ENCODE measurements at regions of chr3 and their contacts with region 1.

Region 1: DNA sequence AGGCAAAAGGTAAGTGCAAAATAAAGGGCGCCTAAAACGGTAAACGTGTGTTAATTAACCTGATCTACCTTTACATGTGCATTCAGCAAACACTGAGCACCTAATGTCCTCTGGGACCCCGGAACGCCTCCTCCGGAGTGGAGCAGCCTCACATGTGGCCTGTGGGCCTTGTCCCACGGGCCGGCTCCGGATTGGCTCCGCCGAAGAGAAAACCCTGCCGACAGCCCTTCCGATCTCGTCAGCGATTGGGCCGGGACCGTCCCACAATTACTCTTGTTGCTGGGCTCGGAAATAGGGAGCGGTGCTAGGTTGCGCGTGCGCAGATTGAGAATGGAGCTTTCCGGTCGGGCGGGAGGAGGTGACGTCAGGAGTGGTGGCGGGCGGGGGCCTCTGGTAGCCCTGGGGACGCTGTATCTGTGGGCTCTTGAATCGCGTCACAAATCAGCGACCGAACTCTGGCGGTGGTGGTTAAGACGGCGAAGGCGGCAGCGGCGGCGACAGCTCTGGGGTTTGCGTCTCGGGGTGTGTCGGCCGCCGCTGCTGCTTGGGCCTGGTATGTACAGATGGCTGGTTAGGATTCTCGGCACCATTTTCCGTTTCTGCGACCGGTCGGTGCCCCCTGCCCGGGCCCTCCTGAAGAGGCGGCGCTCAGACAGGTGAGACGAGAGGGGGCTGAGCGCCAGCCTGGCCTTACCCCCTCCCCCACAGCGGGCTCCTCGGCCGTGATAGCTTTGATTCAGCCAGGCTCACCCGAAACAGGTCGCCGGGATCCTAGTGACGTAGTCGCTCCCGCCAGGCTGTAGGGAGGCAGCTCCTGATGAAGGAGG is at the start of gene SENP2:
- DNase-seq: peak; percentile 99 to 100 (median 100)
- ATAC-seq: peak; percentile 87
- H3K4me3 ChIP-seq: peak within 1 kb of the TSS; percentile 74 to 100
- H3K4me3 Mint-ChIP-seq: peak within 1 kb of the TSS; percentile 85
- H3K27ac ChIP-seq: peak within 1 kb of the TSS; percentile 92 to 99
- H3K27ac Mint-ChIP-seq: peak within 1 kb of the TSS; percentile 92
- H3K4me1 ChIP-seq: peaks cover 28% of the 10 kb centered on the region
- H3K4me1 Mint-ChIP-seq: peaks cover 36% of the 10 kb centered on the region
- H3K27me3 ChIP-seq: no peaks in the 10 kb centered on the region
- H3K27me3 Mint-ChIP-seq: no peaks in the 10 kb centered on the region
- CTCF ChIP-seq: no peak
- total RNA-seq, gene SENP2: 57.0 to 69.6 TPM

Region 2: DNA sequence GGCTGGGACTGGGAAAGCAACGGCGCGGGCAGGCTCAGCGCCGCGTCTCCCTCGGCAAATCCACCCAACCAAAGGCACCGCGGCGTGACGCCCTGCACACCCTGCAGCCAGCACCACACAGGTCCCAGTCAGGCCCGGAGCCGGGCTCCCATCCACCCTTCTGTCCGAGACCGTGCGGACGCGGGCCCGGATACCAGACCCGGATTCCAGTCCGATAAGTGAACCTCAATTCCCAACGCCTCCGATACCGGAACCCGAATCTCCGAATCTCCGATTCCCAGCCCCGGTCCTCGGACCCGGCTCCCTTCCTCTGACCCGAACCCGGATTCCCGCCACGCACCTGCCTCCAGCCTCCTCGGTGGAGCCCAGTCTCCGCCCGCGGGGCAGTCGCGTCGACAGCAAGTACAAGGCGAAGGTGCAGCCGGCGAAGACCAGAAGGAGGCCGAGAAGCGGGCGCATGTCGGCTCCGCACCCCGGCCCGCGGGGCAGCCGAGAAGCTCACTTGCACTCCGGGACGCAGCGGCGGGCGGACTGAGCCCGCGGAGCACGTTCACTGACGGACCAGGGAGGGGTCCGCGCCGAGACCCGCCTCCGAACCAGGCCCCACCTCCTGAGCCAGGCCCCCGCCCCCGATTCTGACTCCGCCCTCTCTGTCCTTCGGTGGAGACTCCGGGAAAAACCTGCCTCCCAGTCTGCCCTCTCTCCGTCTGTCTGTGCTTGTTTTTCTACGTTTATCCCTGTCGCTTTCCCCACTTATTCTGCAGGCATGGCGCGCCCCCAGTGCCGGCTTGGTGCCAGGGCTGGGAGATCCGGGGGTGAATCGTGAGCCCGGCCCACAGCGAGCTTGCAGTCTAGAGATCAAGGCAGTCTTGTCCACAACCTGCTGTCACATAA is 87.3 kb before region 1 on chr3 and contains the start of gene TMEM41A:
- CTCF ChIA-PET with region 1: no interaction called
- POLR2A ChIA-PET with region 1: interaction called, 11 read pairs
- intact Hi-C with region 1: loop called (anchors 1 kb)
- DNase-seq: peak; percentile 77 to 94 (median 89)
- ATAC-seq: peak; percentile 98
- H3K4me3 ChIP-seq: peak within 1 kb of the TSS; percentile 89 to 98
- H3K4me3 Mint-ChIP-seq: peak within 1 kb of the TSS; percentile 95
- H3K27ac ChIP-seq: peak within 1 kb of the TSS; percentile 69 to 81
- H3K27ac Mint-ChIP-seq: peak within 1 kb of the TSS; percentile 91
- H3K4me1 ChIP-seq: peaks cover 20% of the 10 kb centered on the region
- H3K4me1 Mint-ChIP-seq: peaks cover 26% of the 10 kb centered on the region
- H3K27me3 ChIP-seq: no peaks in the 10 kb centered on the region
- H3K27me3 Mint-ChIP-seq: peaks cover 2% of the 10 kb centered on the region
- CTCF ChIP-seq: no peak
- total RNA-seq, gene TMEM41A: 28.2 to 30.3 TPM

Measured in CD8-positive, alpha-beta T cell (primary cell).